B cell (primary cell): ENCODE measurements at regions of chr1 and their contacts with region 1.

Region 1: GRCh38 chr1:8497210-8497801 is 179.4 kb downstream of the SLC45A1 start:
- DNase-seq: peak; percentile 52
- ATAC-seq: peak; percentile 46
- H3K4me3 ChIP-seq: peak overlapping the region in 3 of 5 experiments; percentile 7 to 39 (median 8)
- H3K4me3 Mint-ChIP-seq: peak overlapping the region; percentile 78
- H3K27ac ChIP-seq: peak overlapping the region; percentile 88 to 93
- H3K27ac Mint-ChIP-seq: peak overlapping the region; percentile 91
- H3K4me1 ChIP-seq: peaks cover 50 to 60% of the 10 kb centered on the region in 2 donors
- H3K4me1 Mint-ChIP-seq: peaks cover 61% of the 10 kb centered on the region
- H3K27me3 ChIP-seq: no peaks in the 10 kb centered on the region
- H3K27me3 Mint-ChIP-seq: no peaks in the 10 kb centered on the region
- CTCF ChIP-seq: no peak

Region 2: GRCh38 chr1:8396786-8397406 is 100.4 kb before region 1 on chr1:
- CTCF ChIA-PET with region 1: no interaction called
- POLR2A ChIA-PET with region 1: no interaction called
- intact Hi-C with region 1: loop called (anchors 5 kb)
- DNase-seq: no peak
- ATAC-seq: no peak
- H3K4me3 ChIP-seq: no peak overlapping the region
- H3K4me3 Mint-ChIP-seq: peak overlapping the region; percentile 14
- H3K27ac ChIP-seq: peak overlapping the region; percentile 56 to 79
- H3K27ac Mint-ChIP-seq: peak overlapping the region; percentile 66
- H3K4me1 ChIP-seq: peaks cover 47 to 52% of the 10 kb centered on the region in 2 donors
- H3K4me1 Mint-ChIP-seq: peaks cover 67% of the 10 kb centered on the region
- H3K27me3 ChIP-seq: no peaks in the 10 kb centered on the region
- H3K27me3 Mint-ChIP-seq: no peaks in the 10 kb centered on the region
- CTCF ChIP-seq: no peak

Region 3: GRCh38 chr1:8660411-8660828 is 163.1 kb after region 1 on chr1:
- CTCF ChIA-PET with region 1: no interaction called
- POLR2A ChIA-PET with region 1: no interaction called
- intact Hi-C with region 1: no loop called
- DNase-seq: peak; percentile 43
- ATAC-seq: peak; percentile 22
- H3K4me3 ChIP-seq: peak overlapping the region in 2 of 5 experiments; percentile 22 to 46
- H3K4me3 Mint-ChIP-seq: no peak overlapping the region
- H3K27ac ChIP-seq: peak overlapping the region; percentile 66 to 69
- H3K27ac Mint-ChIP-seq: no peak overlapping the region
- H3K4me1 ChIP-seq: peaks cover 70 to 76% of the 10 kb centered on the region in 2 donors
- H3K4me1 Mint-ChIP-seq: peaks cover 32% of the 10 kb centered on the region
- H3K27me3 ChIP-seq: no peaks in the 10 kb centered on the region
- H3K27me3 Mint-ChIP-seq: no peaks in the 10 kb centered on the region
- CTCF ChIP-seq: no peak